Psoas muscle (tissue), 8 donors: ENCODE measurements at regions of chr1 and their contacts with region 1.

Region 1: DNA sequence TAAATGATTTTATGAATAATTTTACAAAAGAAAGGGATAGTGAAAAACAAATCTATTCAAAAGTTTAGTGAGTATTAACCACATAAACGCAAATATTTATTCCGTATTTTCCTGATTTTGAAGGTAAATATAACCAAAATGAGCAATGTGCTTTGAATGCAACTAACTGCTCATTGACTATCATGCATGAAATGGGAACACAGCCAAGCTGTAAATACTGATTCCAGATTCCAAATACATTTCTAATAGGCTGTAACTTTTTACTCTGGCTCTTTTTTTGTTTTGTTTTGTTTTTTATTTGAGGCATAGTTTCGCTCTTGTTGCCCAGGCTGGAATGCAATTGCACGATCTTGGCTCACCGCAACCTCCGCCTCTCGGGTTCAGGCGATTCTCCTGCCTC is 41.8 kb downstream of the SELENOF start:
- DNase-seq: no peak
- ATAC-seq: no peak
- H3K4me3 ChIP-seq: no peak overlapping the region
- H3K27ac ChIP-seq: no peak overlapping the region
- H3K4me1 ChIP-seq: peaks cover 8% of the 10 kb centered on the region
- H3K27me3 ChIP-seq: no peaks in the 10 kb centered on the region
- CTCF ChIP-seq: no peak

Region 2: DNA sequence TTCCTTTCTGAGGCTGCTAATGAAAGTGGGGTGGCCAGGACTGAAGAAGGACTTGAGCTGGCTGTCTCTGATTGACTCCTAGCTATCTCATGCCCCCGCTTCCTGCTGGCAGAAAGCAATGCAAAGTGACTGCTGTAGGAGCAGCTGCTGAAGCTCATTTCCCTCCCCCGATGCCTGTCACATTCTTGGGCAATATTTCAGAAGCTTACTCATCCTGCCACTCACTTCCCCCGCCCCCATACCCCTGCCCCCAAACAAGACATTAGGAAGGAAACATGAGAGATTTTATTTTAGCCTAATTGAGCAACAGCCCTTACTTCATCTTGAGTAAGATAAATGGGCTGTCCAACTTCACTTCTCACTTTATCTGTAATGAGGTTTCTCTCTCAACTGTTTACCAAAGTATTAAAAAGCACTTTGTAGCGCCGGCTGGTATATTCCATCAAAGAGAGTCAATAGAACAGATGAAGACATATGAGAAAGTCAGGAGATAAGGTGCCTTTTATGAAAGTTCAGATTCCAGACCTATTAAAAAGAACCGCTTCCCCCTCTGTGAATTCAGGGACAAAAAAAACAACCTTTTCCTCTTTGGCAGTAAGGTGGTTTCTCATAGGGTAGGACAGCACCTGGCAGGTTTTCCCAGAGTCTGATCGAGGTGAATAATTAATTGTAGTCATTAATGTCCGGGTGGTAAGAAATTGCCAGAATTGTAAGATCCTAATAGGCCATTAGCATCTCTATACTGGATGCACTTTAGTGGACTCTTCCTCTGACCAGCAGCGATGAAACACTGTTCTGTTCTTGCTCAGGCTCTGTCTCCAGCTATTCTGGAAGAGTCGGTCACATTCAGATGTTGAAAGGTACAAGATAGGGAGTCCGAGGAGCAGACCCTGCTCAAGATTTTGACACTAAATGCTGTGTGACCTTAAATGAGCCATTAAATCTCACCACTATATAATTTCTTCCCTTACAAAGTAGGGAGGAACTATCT is 97.5 kb before region 1 on chr1:
- intact Hi-C with region 1: no loop called
- DNase-seq: peak; percentile 71 to 88
- ATAC-seq: peak; percentile 95 to 96 (median 96)
- H3K4me3 ChIP-seq: peak overlapping the region; percentile 41
- H3K27ac ChIP-seq: peak overlapping the region; percentile 96
- H3K4me1 ChIP-seq: peaks cover 39% of the 10 kb centered on the region
- H3K27me3 ChIP-seq: no peaks in the 10 kb centered on the region
- CTCF ChIP-seq: no peak

Region 3: DNA sequence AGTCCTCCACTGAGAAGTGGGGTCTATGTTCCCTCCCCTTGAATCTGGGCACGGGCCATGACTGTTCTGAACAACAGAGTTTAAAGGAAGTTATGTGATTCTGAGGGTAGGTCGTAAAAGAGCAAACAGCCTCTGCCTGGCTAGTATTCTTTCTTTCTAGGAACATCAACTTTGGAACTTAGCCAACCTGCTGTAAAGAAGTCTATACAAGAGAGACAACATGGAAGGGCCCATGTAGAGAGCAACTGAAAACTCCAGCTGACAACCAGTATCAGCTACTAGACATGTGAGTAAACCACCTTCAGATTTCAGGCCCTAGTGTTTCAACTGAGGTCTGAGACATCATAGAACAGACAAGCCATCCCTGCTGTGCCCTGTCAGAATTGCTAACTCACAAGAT is 34.3 kb after region 1 on chr1:
- intact Hi-C with region 1: loop called in 1 of 2 experiments (anchors 5 kb)
- DNase-seq: no peak
- ATAC-seq: no peak
- H3K4me3 ChIP-seq: no peak overlapping the region
- H3K27ac ChIP-seq: no peak overlapping the region
- H3K4me1 ChIP-seq: peaks cover 27% of the 10 kb centered on the region
- H3K27me3 ChIP-seq: no peaks in the 10 kb centered on the region
- CTCF ChIP-seq: no peak